Dorsolateral prefrontal cortex (tissue), 120 donors: ENCODE measurements at regions of chr16 and their contacts with region 1.

Region 1: GRCh38 chr16:51048544-51048943 is 102.5 kb downstream of the SALL1 start:
- DNase-seq: no peak
- H3K4me3 ChIP-seq: no peak overlapping the region
- H3K27ac ChIP-seq: no peak overlapping the region
- H3K27me3 ChIP-seq: peaks cover 0 to 16% (median 0%) of the 10 kb centered on the region in 45 donors
- CTCF ChIP-seq: no peak

Region 2: GRCh38 chr16:50879873-50880695 is 168.5 kb before region 1 on chr16:
- intact Hi-C with region 1: loop called in 1 of 2 experiments (anchors 10 kb)
- DNase-seq: peak in 4 of 10 donors; percentile 40 to 73 (median 45)
- H3K4me3 ChIP-seq: peak overlapping the region in 36 of 59 donors; percentile 1 to 58 (median 28)
- H3K27ac ChIP-seq: peak overlapping the region in 16 of 59 donors; percentile 4 to 64 (median 38)
- H3K27me3 ChIP-seq: peaks cover 0 to 34% (median 6%) of the 10 kb centered on the region in 45 donors
- CTCF ChIP-seq: no peak

Region 3: DNA sequence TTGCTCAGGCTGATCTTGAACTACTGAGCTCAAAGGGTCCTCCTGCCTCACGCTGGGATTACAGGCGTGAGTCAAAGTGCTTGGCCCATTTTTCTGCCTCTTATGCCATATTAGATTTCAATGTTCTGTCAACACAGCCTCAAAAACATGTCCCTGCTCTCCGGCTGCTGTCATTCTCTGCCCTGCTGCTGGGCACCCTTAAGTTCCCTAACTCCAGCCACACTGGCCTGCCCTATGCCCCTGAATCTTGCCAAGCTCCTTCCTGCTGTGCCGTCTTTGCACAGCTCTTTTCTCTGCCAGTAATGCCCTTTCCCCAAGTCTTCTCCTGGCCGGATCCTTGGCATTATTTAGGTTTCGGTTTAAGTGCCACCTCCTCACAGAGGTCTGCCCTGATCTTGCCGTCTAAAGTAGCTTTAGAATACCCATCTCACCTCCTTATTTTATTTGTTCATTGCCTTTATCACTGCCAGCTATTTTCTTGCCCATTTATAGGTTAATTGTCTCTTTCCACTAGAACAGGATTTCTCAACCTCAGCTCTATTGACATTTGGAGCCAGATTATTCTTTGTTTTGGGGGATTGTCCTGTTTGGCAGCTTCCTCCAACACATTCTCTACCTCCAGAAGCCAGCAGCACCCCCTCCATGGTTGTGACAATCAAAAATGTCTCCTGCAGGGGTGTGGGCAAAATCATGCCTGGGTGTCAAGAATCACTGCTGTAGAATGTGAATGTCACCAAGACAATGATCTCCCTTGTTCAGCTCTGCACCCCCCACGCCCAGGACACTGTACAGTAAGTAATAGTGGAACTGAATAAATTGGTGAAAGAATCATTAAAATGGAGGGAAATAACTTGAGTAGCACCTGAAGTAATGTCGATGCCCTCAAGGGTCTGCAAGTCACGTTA is 138.5 kb before region 1 on chr16:
- intact Hi-C with region 1: loop called in 1 of 2 experiments (anchors 10 kb)
- DNase-seq: peak in 2 of 10 donors; percentile 17 to 35
- H3K4me3 ChIP-seq: peak overlapping the region in 7 of 59 donors; percentile 10 to 46 (median 24)
- H3K27ac ChIP-seq: peak overlapping the region in 5 of 59 donors; percentile 4 to 51 (median 19)
- H3K27me3 ChIP-seq: peaks cover 0 to 4% (median 0%) of the 10 kb centered on the region in 45 donors
- CTCF ChIP-seq: no peak

Region 4: DNA sequence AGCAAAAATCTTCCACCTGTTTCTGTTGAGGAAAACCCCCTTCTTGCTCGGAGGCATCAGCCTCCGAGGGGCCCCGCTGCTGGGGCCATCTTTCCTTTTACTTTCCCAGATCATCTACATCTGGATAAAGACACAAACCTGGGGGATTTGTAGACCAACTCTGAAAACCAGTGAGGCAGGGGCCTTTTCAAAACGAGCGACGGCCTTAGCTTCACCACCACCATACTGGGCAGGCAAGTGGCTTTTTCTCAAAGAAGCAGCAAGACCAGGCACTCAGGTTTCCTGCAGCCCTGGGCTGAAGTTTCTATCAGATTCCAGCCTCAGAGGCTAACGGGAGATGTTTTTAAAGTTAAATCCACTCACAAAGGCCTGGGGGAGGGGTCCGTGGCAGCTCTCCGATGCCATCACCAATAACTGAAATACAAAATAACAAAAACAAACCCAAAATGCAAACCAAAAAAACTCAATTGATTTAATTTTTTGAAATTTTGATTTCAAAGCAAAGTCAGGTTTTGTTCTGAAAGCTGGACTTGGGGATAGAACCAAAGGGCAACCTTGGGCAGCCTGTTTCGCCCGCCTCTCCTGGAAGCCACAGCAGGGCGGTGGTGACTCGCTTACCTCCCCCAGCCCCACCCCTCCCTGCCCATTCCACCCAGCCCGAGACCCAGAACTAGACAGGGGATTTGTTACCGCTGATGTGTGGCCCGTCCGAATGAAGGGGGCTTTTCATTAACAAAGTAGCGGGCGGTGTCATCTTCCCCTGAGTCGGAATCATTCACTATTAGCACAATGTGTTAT is 46.7 kb after region 1 on chr16:
- intact Hi-C with region 1: no loop called
- DNase-seq: peak in 1 of 10 donors; percentile 22
- H3K4me3 ChIP-seq: peak overlapping the region in 27 of 59 donors; percentile 0 to 53 (median 27)
- H3K27ac ChIP-seq: peak overlapping the region in 32 of 59 donors; percentile 1 to 67 (median 29)
- H3K27me3 ChIP-seq: peaks cover 0 to 7% (median 0%) of the 10 kb centered on the region in 45 donors
- CTCF ChIP-seq: no peak

Region 5: DNA sequence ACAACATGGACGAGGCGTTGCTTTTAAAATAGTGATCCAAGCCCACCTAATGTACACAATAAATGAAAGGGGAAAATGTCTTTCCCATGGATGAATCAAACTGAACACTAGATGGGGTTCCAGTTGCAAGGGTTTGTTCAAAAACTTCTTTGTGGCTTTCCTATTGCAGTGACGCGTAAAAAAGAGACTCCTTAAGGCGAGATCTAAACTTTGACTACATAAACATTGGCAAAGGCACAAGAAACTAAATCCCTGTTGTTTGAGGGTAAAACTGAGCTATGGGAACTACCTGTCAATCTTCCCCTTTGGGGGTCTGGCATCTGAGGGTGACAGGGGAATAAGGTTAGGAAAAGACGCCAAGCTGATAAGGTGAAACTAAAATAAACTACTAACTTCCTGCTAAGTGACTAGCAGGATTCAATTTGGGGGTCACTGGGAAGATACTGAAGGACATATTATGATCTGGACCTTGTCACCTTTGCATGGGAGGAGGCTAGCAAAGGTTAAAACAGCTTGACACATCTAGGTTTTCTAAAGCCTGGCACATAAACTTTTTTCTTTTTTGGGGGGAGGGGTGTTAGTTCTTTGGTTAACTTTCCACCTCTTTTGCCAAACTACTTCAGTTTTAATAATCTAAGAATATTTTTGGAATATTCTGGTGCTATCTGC is 97.8 kb after region 1 on chr16:
- intact Hi-C with region 1: loop called in 1 of 2 experiments (anchors 5 kb)
- DNase-seq: no peak
- H3K4me3 ChIP-seq: peak overlapping the region in 53 of 59 donors; percentile 2 to 94 (median 39)
- H3K27ac ChIP-seq: peak overlapping the region in 55 of 59 donors; percentile 7 to 99 (median 72)
- H3K27me3 ChIP-seq: peaks cover 0 to 67% (median 23%) of the 10 kb centered on the region in 45 donors
- CTCF ChIP-seq: peak in 54 of 56 donors; percentile 20 to 78 (median 49)

Region 6: GRCh38 chr16:51762081-51762996 is 713.8 kb after region 1 on chr16:
- intact Hi-C with region 1: loop called in 1 of 2 experiments (anchors 10 kb)
- DNase-seq: peak; percentile 26 to 90 (median 85)
- H3K4me3 ChIP-seq: peak overlapping the region in 44 of 59 donors; percentile 5 to 61 (median 38)
- H3K27ac ChIP-seq: peak overlapping the region in 4 of 59 donors; percentile 20 to 34 (median 30)
- H3K27me3 ChIP-seq: peaks cover 0 to 32% (median 3%) of the 10 kb centered on the region in 45 donors
- CTCF ChIP-seq: peak; percentile 83 to 99 (median 95)